HepG2 (cell line): ENCODE measurements at regions of chr6 and their contacts with region 1.

Region 1: DNA sequence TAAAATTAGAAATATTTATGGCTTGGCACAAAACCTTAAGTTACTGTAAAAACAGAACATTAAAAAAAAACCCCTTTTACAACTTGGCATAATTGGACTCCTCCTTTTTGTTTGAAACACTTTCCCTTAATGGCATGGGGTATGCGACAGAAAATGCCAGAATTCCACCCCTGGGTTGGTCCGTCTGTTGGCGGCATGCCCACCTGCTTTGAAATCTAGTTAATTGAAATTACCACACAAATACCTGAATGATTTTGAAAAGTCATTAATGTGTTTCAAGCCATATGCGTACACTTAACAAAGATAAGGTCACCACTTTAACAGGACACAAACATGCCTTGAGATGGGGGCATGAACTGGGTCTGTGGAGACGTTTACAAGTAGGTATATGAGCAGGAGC is 175.0 kb upstream of the FOXQ1 start:
- DNase-seq: no peak
- ATAC-seq: no peak
- H3K4me3 ChIP-seq: no peak overlapping the region
- H3K27ac ChIP-seq: no peak overlapping the region
- H3K4me1 ChIP-seq: peaks cover 15% of the 10 kb centered on the region
- H3K27me3 ChIP-seq: no peaks in the 10 kb centered on the region
- CTCF ChIP-seq: no peak
- EP300 ChIP-seq: no peak
- POLR2A ChIP-seq: no peak
- RAD21 ChIP-seq: no peak

Region 2: GRCh38 chr6:939526-940252 is 197.2 kb before region 1 on chr6:
- CTCF ChIA-PET with region 1: no interaction called
- POLR2A ChIA-PET with region 1: no interaction called
- in situ Hi-C with region 1: no loop called
- intact Hi-C with region 1: no loop called
- DNase-seq: no peak
- ATAC-seq: peak; percentile 54
- H3K4me3 ChIP-seq: no peak overlapping the region
- H3K27ac ChIP-seq: no peak overlapping the region
- H3K4me1 ChIP-seq: peaks cover 12% of the 10 kb centered on the region; the same call in 1 of the 2 replicates
- H3K27me3 ChIP-seq: peaks cover 6 to 61% of the 10 kb centered on the region in 2 experiments; a peak in 4 of 5 replicates
- CTCF ChIP-seq: peak; percentile 22
- EP300 ChIP-seq: no peak
- POLR2A ChIP-seq: no peak
- RAD21 ChIP-seq: no peak

Region 3: GRCh38 chr6:1123386-1124375 is 13.2 kb before region 1 on chr6:
- CTCF ChIA-PET with region 1: no interaction called
- POLR2A ChIA-PET with region 1: no interaction called
- in situ Hi-C with region 1: no loop called
- intact Hi-C with region 1: loop called (anchors 1 kb)
- DNase-seq: no peak
- ATAC-seq: no peak
- H3K4me3 ChIP-seq: no peak overlapping the region
- H3K27ac ChIP-seq: no peak overlapping the region
- H3K4me1 ChIP-seq: peaks cover 31% of the 10 kb centered on the region
- H3K27me3 ChIP-seq: no peaks in the 10 kb centered on the region
- CTCF ChIP-seq: no peak
- EP300 ChIP-seq: no peak
- POLR2A ChIP-seq: no peak
- RAD21 ChIP-seq: no peak

Region 4: DNA sequence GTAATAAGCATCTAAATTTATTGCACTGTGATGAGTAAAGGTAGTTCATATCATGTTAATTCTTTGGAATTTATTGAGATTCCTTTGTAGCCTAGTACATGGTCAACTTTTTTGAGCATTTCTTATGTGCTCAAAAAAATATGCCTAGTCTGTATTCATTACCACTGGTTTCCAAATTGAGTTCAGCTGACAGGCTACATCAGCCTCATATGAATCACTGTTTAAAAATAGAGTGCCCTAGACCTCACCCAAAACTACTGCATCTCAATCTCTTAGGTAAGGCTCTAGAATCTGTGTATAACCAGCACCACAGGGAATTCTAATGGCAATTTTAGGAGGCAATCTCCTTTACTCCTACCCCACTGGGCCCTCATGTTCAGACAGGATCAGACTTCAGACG is 235.8 kb after region 1 on chr6:
- CTCF ChIA-PET with region 1: no interaction called
- POLR2A ChIA-PET with region 1: no interaction called
- in situ Hi-C with region 1: no loop called
- intact Hi-C with region 1: no loop called
- DNase-seq: no peak
- ATAC-seq: no peak
- H3K4me3 ChIP-seq: no peak overlapping the region
- H3K27ac ChIP-seq: no peak overlapping the region
- H3K4me1 ChIP-seq: no peaks in the 10 kb centered on the region
- H3K27me3 ChIP-seq: peaks cover 4 to 71% of the 10 kb centered on the region in 2 experiments; a peak in 4 of 5 replicates
- CTCF ChIP-seq: no peak
- EP300 ChIP-seq: no peak
- POLR2A ChIP-seq: no peak
- RAD21 ChIP-seq: no peak